ENCODE measurements at regions of chr18 and their contacts with region 1.

Region 1: GRCh38 chr18:76803814-76804213 is 18.5 kb upstream of the ZNF236 start:
- DNase-seq: no peak
- H3K4me3 ChIP-seq: no peak overlapping the region
- H3K27me3 ChIP-seq: no peaks in the 10 kb centered on the region; the same call in 1 of the 2 replicates
- CTCF ChIP-seq: peak; percentile 91

Region 2: DNA sequence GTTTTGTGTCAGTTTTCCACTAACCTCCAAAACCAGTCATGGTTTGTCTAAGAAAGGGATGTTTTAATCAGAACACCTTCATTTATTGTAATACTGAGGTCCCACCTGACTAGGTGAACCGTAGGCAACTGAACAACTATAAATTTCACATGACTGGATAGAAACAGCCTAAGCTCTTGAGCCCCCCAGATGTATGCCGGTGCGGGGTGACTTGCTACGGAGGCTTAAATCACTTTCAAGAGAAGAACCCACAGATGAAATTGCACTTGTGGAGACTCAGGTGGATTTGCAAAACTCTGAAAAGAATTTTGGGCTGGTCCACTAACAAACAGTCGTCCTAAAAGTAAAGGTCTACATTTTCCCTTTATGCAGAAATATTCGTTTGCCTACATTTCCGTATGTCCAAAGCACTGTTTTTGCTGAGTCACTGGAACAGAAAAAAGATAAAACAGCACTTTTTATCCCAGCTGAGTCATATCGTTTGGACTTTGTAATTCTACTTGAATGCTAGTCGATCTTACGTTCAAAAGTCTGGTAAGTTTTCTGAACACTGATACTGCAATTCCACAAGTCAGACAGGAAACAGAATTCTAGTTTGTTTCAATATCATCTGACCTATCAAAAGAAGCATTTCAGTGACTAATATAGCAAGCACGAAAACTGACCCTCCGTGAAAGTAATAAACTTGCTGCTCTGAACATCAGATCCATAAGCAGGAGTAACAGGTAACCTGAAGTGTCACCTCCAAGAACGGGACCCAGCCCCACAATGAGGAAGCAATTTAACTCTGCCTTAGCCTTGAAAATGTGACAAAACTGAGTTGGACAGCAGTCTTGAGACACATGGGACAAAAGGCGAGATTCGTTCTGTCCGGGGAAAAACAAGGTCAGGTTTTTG is 326.9 kb before region 1 on chr18:
- CTCF ChIA-PET with region 1: no interaction called
- POLR2A ChIA-PET with region 1: no interaction called
- DNase-seq: peak; percentile 86
- H3K4me3 ChIP-seq: peak overlapping the region; percentile 34
- H3K27me3 ChIP-seq: no peaks in the 10 kb centered on the region
- CTCF ChIP-seq: no peak

Region 3: DNA sequence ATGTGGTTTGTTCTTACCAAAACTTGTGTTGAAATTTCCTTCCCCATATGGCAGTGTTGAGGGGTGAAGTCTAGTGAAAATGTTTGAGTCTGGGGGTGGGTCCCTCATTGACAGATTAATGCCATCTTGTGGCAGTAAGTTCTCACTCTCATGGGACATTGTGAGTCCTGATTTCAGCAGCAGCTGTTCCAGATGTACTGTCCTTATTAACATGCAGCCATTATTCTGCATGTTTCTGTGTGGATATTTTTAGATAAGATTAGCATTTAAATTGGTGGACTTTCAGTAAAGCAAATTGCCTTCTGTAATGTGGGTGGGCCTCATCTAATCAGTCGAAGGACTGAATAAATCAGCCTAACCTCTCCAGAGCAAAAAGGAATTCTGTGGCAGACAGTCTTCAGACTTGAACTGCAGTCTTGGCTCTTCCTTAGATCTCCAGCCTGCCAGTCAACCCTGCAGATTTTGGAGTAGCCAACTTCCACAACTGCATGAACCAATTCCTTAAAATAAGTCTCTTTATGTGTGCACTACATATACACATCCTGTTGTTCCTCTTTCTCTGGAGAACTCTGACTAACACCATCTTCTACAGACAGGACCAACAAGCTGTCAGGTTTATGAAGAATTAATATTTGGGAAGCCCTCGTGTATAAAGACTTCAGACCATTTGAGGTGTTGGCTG is 170.1 kb before region 1 on chr18:
- CTCF ChIA-PET with region 1: no interaction called
- POLR2A ChIA-PET with region 1: no interaction called
- DNase-seq: no peak
- H3K4me3 ChIP-seq: no peak overlapping the region
- H3K27me3 ChIP-seq: 0 out of 2 replicates have a peak, but pooled peaks cover 2% of the 10 kb centered on the region
- CTCF ChIP-seq: no peak

Region 4: DNA sequence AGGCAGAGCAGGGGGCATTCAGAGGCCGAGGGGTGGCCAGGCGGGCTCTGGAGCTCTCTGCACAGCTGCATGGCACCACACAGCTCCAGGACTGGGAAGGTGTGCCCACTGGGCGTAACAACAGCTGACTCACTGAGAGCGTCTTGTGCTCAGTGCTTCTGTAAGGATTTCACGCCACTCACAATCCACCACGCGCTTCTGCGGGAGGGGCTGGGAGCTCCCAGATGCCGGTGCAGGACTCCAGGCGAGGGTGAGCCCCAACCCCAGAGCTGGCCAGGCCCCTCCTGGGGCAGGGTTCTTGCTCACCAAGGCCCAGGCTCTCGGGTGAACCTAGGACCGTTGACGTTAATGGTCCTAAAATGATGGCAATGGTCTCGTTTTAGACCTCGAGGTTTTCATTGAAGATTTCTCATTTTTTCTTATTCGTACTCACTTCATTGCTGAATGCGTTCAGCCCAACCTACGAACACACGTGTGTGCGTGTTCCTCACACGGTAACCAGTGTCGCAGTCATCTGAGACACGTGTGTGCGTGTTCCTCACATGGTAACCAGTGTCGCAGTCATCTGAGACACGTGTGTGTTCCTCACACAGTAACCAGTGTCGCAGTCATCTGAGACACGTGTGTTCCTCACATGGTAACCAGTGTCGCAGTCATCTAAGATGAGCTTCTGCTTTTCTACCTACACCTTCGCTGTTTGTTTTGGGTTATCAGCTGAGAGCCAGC is 19.9 kb before region 1 on chr18:
- CTCF ChIA-PET with region 1: interaction called, 61 read pairs
- POLR2A ChIA-PET with region 1: no interaction called
- DNase-seq: no peak
- H3K4me3 ChIP-seq: no peak overlapping the region
- H3K27me3 ChIP-seq: no peaks in the 10 kb centered on the region; the same call in 1 of the 2 replicates
- CTCF ChIP-seq: no peak

Region 5: DNA sequence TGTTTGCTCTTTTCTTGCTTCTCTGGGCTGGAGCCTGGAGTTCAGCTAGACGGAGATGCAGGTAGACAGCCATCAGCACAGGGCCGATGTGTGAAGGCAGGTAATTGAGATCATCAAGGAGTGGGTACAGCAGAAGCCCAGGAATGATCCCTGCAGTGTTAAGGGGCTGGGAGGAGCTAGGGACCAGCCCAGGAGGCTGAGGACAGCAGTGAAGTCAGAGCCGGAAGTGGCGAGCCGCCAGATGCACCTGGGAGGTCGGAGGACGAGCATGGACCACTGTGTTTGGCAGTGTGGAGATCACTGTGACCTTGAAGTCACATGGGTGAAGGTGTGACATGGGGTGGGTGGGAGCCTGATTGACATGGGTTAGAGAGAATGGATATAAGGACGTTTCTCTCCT is 12.3 kb after region 1 on chr18:
- CTCF ChIA-PET with region 1: interaction called, 69 read pairs
- POLR2A ChIA-PET with region 1: no interaction called
- DNase-seq: no peak
- H3K4me3 ChIP-seq: no peak overlapping the region
- H3K27me3 ChIP-seq: no peaks in the 10 kb centered on the region
- CTCF ChIP-seq: no peak

Region 6: GRCh38 chr18:76859474-76860339 is 55.9 kb after region 1 on chr18:
- CTCF ChIA-PET with region 1: interaction called, 12 read pairs
- POLR2A ChIA-PET with region 1: no interaction called
- DNase-seq: no peak
- H3K4me3 ChIP-seq: no peak overlapping the region
- H3K27me3 ChIP-seq: no peaks in the 10 kb centered on the region
- CTCF ChIP-seq: no peak

Region 7: GRCh38 chr18:76977108-76977621 is 173.4 kb after region 1 on chr18:
- CTCF ChIA-PET with region 1: interaction called, 166 read pairs
- POLR2A ChIA-PET with region 1: no interaction called
- DNase-seq: no peak
- H3K4me3 ChIP-seq: no peak overlapping the region
- H3K27me3 ChIP-seq: no peaks in the 10 kb centered on the region
- CTCF ChIP-seq: no peak

Region 8: DNA sequence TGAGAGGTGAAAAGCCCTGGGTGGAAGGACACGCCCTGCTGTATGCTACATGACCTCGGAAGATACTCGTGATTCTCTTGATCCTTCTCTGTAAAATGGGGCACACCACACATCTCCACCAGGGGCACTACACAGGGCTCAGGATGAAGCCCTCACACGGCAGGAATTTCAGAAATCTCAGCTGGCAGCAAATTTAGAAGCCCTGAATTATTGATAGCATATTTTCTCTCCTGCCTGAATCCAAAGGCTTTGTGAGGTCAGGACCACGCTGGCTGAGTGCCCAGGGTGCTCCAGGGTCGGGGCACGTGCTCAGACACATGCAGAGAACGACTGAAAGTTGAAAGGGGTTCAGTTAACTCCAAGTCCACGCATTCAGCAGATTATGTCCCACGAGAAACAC is 403.7 kb after region 1 on chr18:
- CTCF ChIA-PET with region 1: interaction called, 14 read pairs
- POLR2A ChIA-PET with region 1: no interaction called
- DNase-seq: no peak
- H3K4me3 ChIP-seq: no peak overlapping the region
- H3K27me3 ChIP-seq: peaks cover 5% of the 10 kb centered on the region
- CTCF ChIP-seq: peak; percentile 67